Ascending aorta (tissue), 2 donors: ENCODE measurements at regions of chr1 and their contacts with region 1.

Region 1: GRCh38 chr1:15152318-15153183 is 996 bp upstream of the TMEM51 start:
- DNase-seq: peak; percentile 44 to 90
- H3K4me3 ChIP-seq: peak overlapping the region; percentile 78 to 91
- H3K27ac ChIP-seq: peak overlapping the region; percentile 74 to 82
- H3K4me1 ChIP-seq: peaks cover 0 to 3% of the 10 kb centered on the region in 2 donors
- H3K27me3 ChIP-seq: no peaks in the 10 kb centered on the region
- CTCF ChIP-seq: peak; percentile 35 to 71 (median 59)

Region 2: DNA sequence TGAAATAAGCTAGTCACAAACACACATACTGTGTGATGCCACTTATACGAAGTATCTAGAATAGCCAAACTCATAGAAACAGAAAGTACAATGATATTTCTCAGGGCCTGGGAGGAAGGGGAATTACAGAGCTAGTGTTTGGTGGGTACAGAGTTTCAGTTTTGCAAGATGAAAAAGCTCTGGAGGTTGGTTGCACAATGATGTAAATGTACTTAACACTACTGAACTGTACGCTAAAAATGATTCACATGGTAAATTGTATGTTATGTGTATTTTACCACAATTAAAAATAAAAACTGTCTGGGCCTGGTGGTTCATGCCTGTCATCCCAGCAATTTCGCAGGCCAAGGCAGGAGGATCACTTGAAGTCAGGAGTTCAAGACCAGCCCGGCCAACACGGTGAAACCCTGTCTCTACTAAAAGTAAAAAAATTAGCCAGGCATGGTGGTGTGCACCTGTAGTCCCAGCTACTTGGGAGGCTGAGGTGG is 79.2 kb after region 1 on chr1:
- intact Hi-C with region 1: no loop called
- DNase-seq: no peak
- H3K4me3 ChIP-seq: no peak overlapping the region
- H3K27ac ChIP-seq: no peak overlapping the region
- H3K4me1 ChIP-seq: no peaks in the 10 kb centered on the region
- H3K27me3 ChIP-seq: no peaks in the 10 kb centered on the region
- CTCF ChIP-seq: no peak

Region 3: GRCh38 chr1:15272009-15272788 is 119.6 kb after region 1 on chr1:
- intact Hi-C with region 1: loop called (anchors 1 kb)
- DNase-seq: peak in 1 of 2 donors; percentile 73
- H3K4me3 ChIP-seq: no peak overlapping the region
- H3K27ac ChIP-seq: no peak overlapping the region
- H3K4me1 ChIP-seq: no peaks in the 10 kb centered on the region
- H3K27me3 ChIP-seq: no peaks in the 10 kb centered on the region
- CTCF ChIP-seq: peak; percentile 72 to 85 (median 76)